ENCODE measurements at regions of chr7 and their contacts with region 1.

Region 1: GRCh38 chr7:138008547-138009349 is 6.9 kb upstream of the CREB3L2 start:
- DNase-seq: peak in 1 of 6 donors; percentile 45
- ATAC-seq: peak; percentile 66 to 97 (median 88)
- H3K4me3 ChIP-seq: no peak overlapping the region
- H3K27ac ChIP-seq: no peak overlapping the region
- H3K4me1 ChIP-seq: no peaks in the 10 kb centered on the region
- H3K27me3 ChIP-seq: no peaks in the 10 kb centered on the region
- CTCF ChIP-seq: peak; percentile 79 to 87 (median 84)

Region 2: DNA sequence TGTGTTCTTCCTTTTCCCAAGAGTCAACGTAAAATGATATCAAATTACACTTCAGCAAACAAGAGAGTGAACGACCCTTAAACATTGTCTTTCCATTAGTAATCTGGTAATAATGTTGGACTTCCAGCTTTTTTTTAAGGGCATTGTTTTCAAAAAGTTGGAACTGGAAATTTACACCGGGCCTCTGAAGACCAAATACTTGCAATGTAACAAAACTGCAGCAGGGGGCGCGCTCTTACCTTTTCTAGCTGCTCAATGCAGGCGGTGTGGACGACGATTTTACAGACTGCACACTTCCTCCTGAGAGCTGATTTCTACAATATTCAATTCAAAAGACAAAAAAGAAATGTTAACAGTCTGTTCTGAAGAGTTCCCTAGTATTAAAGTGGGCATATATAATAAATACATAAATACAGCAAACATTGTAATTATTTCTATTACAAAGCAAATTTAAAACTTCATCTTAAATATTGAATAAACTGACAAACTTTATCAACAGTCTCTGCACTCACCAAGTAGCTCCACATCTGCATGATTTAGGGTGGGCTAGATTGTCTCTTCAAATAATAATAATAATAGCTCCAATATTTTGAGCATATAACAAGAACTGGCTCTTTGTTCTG is 352.4 kb before region 1 on chr7:
- intact Hi-C with region 1: loop called in 1 of 3 experiments (anchors 5 kb)
- DNase-seq: peak; percentile 55 to 88 (median 74)
- ATAC-seq: peak; percentile 76 to 99 (median 94)
- H3K4me3 ChIP-seq: no peak overlapping the region
- H3K27ac ChIP-seq: no peak overlapping the region
- H3K4me1 ChIP-seq: no peaks in the 10 kb centered on the region
- H3K27me3 ChIP-seq: no peaks in the 10 kb centered on the region
- CTCF ChIP-seq: peak; percentile 44 to 73 (median 66)

Region 3: GRCh38 chr7:137731436-137731835 is 277.3 kb before region 1 on chr7:
- intact Hi-C with region 1: no loop called
- DNase-seq: no peak
- ATAC-seq: no peak
- H3K4me3 ChIP-seq: no peak overlapping the region
- H3K27ac ChIP-seq: no peak overlapping the region
- H3K4me1 ChIP-seq: no peaks in the 10 kb centered on the region
- H3K27me3 ChIP-seq: peaks cover 0 to 4% (median 0%) of the 10 kb centered on the region in 4 donors
- CTCF ChIP-seq: no peak

Region 4: GRCh38 chr7:137898839-137899721 is 109.7 kb before region 1 on chr7:
- intact Hi-C with region 1: loop called in 2 of 3 experiments (anchors 5 kb)
- DNase-seq: peak; percentile 58 to 90 (median 76)
- ATAC-seq: peak; percentile 75 to 94 (median 94)
- H3K4me3 ChIP-seq: no peak overlapping the region
- H3K27ac ChIP-seq: no peak overlapping the region
- H3K4me1 ChIP-seq: no peaks in the 10 kb centered on the region
- H3K27me3 ChIP-seq: no peaks in the 10 kb centered on the region
- CTCF ChIP-seq: peak; percentile 70 to 89 (median 82)

Region 5: GRCh38 chr7:138137423-138138171 is 128.8 kb after region 1 on chr7:
- intact Hi-C with region 1: no loop called
- DNase-seq: no peak
- ATAC-seq: no peak
- H3K4me3 ChIP-seq: no peak overlapping the region
- H3K27ac ChIP-seq: no peak overlapping the region
- H3K4me1 ChIP-seq: no peaks in the 10 kb centered on the region
- H3K27me3 ChIP-seq: no peaks in the 10 kb centered on the region
- CTCF ChIP-seq: no peak